PC-9 (cell line): ENCODE measurements at regions of chr10 and their contacts with region 1.

Region 1: GRCh38 chr10:101441541-101442455 is 87.8 kb downstream of the BTRC start:
- DNase-seq: peak; percentile 7 to 36
- H3K4me3 ChIP-seq: no peak overlapping the region
- H3K27ac ChIP-seq: no peak overlapping the region
- H3K4me1 ChIP-seq: no peaks in the 10 kb centered on the region
- H3K27me3 ChIP-seq: no peaks in the 10 kb centered on the region
- CTCF ChIP-seq: peak; percentile 68

Region 2: DNA sequence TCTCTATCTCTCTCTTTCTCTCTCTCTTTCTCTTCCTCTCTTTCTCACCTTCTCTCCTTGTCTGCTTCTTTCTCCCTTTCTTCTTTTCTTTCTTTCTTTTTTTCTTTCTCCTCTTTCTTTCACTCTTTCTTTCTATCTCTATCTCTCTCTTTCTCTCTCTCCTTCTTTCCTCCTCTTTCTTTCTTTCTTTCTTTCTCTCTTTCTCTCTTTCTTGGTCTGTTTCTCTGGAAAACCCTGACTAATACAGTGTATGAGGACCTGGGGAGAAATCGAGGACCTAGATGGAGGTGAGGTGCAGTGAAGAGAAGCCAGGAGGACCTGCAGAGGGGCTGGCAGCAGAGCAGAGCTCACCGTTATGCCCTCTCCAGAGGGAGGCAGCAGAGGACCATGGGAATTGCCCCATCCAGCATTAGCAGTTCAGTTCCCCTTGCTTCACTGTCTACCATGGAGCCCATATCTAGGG is 140.5 kb before region 1 on chr10:
- CTCF ChIA-PET with region 1: interaction called, 3 read pairs
- POLR2A ChIA-PET with region 1: no interaction called
- intact Hi-C with region 1: loop called (anchors 1 kb)
- DNase-seq: peak in 1 of 2 experiments; percentile 46
- H3K4me3 ChIP-seq: no peak overlapping the region
- H3K27ac ChIP-seq: no peak overlapping the region
- H3K4me1 ChIP-seq: no peaks in the 10 kb centered on the region
- H3K27me3 ChIP-seq: peaks cover 7% of the 10 kb centered on the region; the same call in 1 of the 2 replicates
- CTCF ChIP-seq: peak; percentile 58

Region 3: DNA sequence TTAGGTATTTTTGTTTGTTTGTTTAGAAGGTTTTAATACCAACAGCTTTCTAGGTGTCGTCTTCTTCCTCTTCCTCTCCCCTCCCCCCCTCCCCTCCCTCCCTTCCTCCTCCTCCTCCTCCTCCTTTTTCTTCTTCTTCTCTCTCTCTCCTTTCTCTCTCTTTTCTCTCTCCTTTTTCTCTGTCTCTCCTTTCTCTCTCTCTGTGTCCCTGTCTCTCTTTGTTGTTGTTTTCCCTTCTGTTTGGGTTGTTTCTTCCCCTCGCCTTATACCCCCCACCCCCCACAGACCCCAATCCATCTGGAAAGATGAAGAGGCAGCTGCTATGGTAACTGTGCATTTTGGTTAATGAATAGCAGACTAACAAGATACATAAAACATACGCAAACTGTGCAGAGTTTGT is 12.4 kb before region 1 on chr10:
- CTCF ChIA-PET with region 1: interaction called, 20 read pairs
- POLR2A ChIA-PET with region 1: no interaction called
- intact Hi-C with region 1: no loop called
- DNase-seq: no peak
- H3K4me3 ChIP-seq: no peak overlapping the region
- H3K27ac ChIP-seq: no peak overlapping the region
- H3K4me1 ChIP-seq: no peaks in the 10 kb centered on the region
- H3K27me3 ChIP-seq: no peaks in the 10 kb centered on the region
- CTCF ChIP-seq: no peak

Region 4: GRCh38 chr10:101453791-101454718 is 12.3 kb after region 1 on chr10:
- CTCF ChIA-PET with region 1: interaction called, 11 read pairs
- POLR2A ChIA-PET with region 1: no interaction called
- intact Hi-C with region 1: no loop called
- DNase-seq: no peak
- H3K4me3 ChIP-seq: no peak overlapping the region
- H3K27ac ChIP-seq: no peak overlapping the region
- H3K4me1 ChIP-seq: no peaks in the 10 kb centered on the region
- H3K27me3 ChIP-seq: no peaks in the 10 kb centered on the region
- CTCF ChIP-seq: no peak

Region 5: GRCh38 chr10:101545898-101546297 is 104.1 kb after region 1 on chr10:
- CTCF ChIA-PET with region 1: interaction called, 12 read pairs
- POLR2A ChIA-PET with region 1: no interaction called
- intact Hi-C with region 1: no loop called
- DNase-seq: no peak
- H3K4me3 ChIP-seq: no peak overlapping the region
- H3K27ac ChIP-seq: no peak overlapping the region
- H3K4me1 ChIP-seq: no peaks in the 10 kb centered on the region
- H3K27me3 ChIP-seq: no peaks in the 10 kb centered on the region
- CTCF ChIP-seq: no peak

Region 6: GRCh38 chr10:102064868-102065560 is 623.2 kb after region 1 on chr10 and contains the start of gene HPS6:
- CTCF ChIA-PET with region 1: interaction called, 11 read pairs
- POLR2A ChIA-PET with region 1: no interaction called
- intact Hi-C with region 1: no loop called
- DNase-seq: peak; percentile 79 to 88
- H3K4me3 ChIP-seq: peak within 1 kb of the TSS; percentile 81
- H3K27ac ChIP-seq: peak within 1 kb of the TSS; percentile 65
- H3K4me1 ChIP-seq: 0 out of 2 replicates have a peak, but pooled peaks cover 6% of the 10 kb centered on the region
- H3K27me3 ChIP-seq: no peaks in the 10 kb centered on the region
- CTCF ChIP-seq: no peak
- total RNA-seq, gene HPS6: 12.5 and 16.9 TPM in 2 replicates